ENCODE measurements at regions of chr21 and their contacts with region 1.

Region 1: GRCh38 chr21:14737922-14738321 is 191.8 kb upstream of the SAMSN1 start:
- DNase-seq: peak; percentile 58
- ATAC-seq: peak; percentile 77
- H3K4me3 Mint-ChIP-seq: no peak overlapping the region
- H3K27ac Mint-ChIP-seq: no peak overlapping the region
- H3K4me1 Mint-ChIP-seq: peaks cover 33% of the 10 kb centered on the region
- H3K27me3 Mint-ChIP-seq: no peaks in the 10 kb centered on the region
- CTCF ChIP-seq: peak; percentile 82

Region 2: GRCh38 chr21:14454016-14455009 is 283.6 kb before region 1 on chr21:
- CTCF ChIA-PET with region 1: interaction called, 10 read pairs
- POLR2A ChIA-PET with region 1: no interaction called
- intact Hi-C with region 1: no loop called
- DNase-seq: no peak
- ATAC-seq: peak; percentile 41
- H3K4me3 Mint-ChIP-seq: peak overlapping the region; percentile 37
- H3K27ac Mint-ChIP-seq: peak overlapping the region; percentile 90
- H3K4me1 Mint-ChIP-seq: peaks cover 50% of the 10 kb centered on the region
- H3K27me3 Mint-ChIP-seq: peaks cover 3% of the 10 kb centered on the region
- CTCF ChIP-seq: no peak

Region 3: DNA sequence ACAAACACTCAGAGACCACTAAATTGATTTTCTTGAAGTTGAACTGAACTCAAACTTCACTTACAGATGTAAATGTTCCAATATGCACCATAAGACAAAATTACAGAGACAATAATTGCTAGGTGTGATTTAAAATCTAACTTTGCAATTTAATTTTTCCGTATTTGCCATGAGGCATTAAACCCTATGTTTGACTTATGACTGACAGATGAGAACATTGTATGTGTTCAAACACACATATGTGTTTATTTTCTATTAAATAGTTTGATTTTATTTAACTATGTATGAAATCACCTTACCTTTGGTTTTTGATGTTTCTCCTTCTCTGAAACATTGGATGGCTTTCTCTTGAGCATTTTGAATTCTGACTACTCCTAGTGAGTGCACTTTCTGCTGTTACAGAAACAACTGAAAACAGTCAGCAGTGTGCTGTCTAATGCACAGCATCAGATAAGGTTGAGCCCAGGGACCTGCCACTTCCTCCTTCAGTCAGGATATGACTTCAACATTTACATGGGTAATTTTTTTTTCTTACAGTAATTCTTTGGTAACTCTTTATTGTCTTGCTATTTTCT is 191.9 kb before region 1 on chr21 and contains the start of gene SAMSN1:
- CTCF ChIA-PET with region 1: interaction called, 25 read pairs
- POLR2A ChIA-PET with region 1: interaction called, 3 read pairs
- intact Hi-C with region 1: loop called (anchors 5 kb)
- DNase-seq: peak; percentile 86
- ATAC-seq: peak; percentile 87
- H3K4me3 Mint-ChIP-seq: peak within 1 kb of the TSS; percentile 96
- H3K27ac Mint-ChIP-seq: peak within 1 kb of the TSS; percentile 94
- H3K4me1 Mint-ChIP-seq: peaks cover 51% of the 10 kb centered on the region
- H3K27me3 Mint-ChIP-seq: no peaks in the 10 kb centered on the region
- CTCF ChIP-seq: no peak
- total RNA-seq, gene SAMSN1: 66.7 to 71.4 TPM

Region 4: GRCh38 chr21:14630556-14631069 is 107.3 kb before region 1 on chr21:
- CTCF ChIA-PET with region 1: interaction called, 10 read pairs
- POLR2A ChIA-PET with region 1: no interaction called
- intact Hi-C with region 1: no loop called
- DNase-seq: no peak
- ATAC-seq: peak; percentile 90
- H3K4me3 Mint-ChIP-seq: no peak overlapping the region
- H3K27ac Mint-ChIP-seq: peak overlapping the region; percentile 75
- H3K4me1 Mint-ChIP-seq: peaks cover 17% of the 10 kb centered on the region
- H3K27me3 Mint-ChIP-seq: no peaks in the 10 kb centered on the region
- CTCF ChIP-seq: no peak

Region 5: GRCh38 chr21:14718951-14719350 is 19.0 kb before region 1 on chr21:
- CTCF ChIA-PET with region 1: interaction called, 10 read pairs
- POLR2A ChIA-PET with region 1: no interaction called
- intact Hi-C with region 1: no loop called
- DNase-seq: no peak
- ATAC-seq: no peak
- H3K4me3 Mint-ChIP-seq: no peak overlapping the region
- H3K27ac Mint-ChIP-seq: no peak overlapping the region
- H3K4me1 Mint-ChIP-seq: peaks cover 8% of the 10 kb centered on the region
- H3K27me3 Mint-ChIP-seq: no peaks in the 10 kb centered on the region
- CTCF ChIP-seq: no peak

Region 6: DNA sequence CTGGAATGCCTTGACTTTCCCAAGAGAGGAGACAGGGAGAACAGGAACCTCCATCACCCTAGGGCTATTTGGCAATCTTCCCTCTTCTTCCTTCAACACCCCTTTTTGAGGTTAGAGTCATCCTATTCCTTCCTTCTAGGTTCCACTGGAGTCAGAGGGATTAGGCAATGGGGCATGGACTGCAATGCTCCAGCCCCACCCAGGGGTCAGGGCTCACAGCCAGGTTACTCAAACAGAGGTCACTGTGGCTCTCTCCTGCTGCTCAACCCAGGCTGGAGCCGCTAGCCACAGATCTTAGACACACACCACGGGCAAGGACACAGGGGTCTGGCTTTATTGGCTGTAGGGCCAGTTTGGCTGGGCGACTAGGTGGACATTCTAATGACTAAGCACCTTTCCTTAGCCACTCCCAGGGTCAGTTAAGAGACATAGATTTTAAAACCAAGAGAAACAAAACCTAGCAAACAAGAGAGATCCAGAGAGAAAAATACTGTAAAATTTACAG is 472.4 kb after region 1 on chr21:
- CTCF ChIA-PET with region 1: no interaction called
- POLR2A ChIA-PET with region 1: no interaction called
- intact Hi-C with region 1: no loop called
- DNase-seq: no peak
- ATAC-seq: no peak
- H3K4me3 Mint-ChIP-seq: no peak overlapping the region
- H3K27ac Mint-ChIP-seq: no peak overlapping the region
- H3K4me1 Mint-ChIP-seq: no peaks in the 10 kb centered on the region
- H3K27me3 Mint-ChIP-seq: peaks cover 6% of the 10 kb centered on the region
- CTCF ChIP-seq: no peak